ENCODE measurements at regions of chr6 and their contacts with region 1.

Region 1: DNA sequence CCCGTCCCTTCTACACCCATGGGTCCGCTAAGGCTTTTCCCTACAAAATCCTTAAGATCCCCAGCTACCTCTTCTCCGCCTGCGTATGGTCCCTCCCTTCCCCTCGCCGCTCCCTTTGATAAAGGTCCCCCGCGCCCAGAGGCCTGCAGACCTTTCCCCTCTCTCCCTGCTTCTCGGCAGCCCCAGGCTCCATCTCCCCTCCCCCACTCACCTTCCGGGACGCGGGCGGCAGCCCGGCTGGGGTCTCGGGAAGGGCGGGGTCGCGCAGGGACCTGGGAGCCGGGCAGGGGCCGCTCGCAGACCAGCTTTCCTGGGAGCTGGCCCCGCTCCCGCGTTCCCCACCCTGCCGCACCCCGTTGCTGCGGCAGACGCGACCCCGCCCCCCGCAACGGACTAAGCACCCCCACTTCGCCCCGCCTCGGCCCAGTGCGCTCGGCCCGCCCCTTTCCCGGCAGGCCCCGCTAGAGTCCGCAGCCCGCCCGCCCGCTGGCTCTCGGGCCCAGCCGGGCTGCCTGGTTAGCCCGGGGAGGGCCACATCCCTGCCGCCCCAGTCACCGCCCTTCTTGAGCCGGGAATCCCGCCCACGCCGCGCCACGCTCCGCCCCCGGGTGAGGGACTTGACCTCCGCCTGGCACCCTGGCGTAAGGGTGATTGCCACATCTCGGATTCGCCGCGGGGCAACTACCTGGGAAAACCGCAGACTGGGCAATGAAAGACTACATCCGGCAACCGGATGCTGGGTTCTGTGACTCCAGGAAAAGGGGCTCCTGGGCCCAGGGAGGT is at the start of gene FLOT1:
- DNase-seq: peak in 7 of 9 donors; percentile 47 to 98 (median 56)
- ATAC-seq: peak; percentile 84
- H3K4me3 ChIP-seq: peak within 1 kb of the TSS; percentile 85
- H3K4me3 Mint-ChIP-seq: peak within 1 kb of the TSS; percentile 84 to 100 (median 93)
- H3K27ac ChIP-seq: peak within 1 kb of the TSS; percentile 83
- H3K27ac Mint-ChIP-seq: peak within 1 kb of the TSS; percentile 84 to 98 (median 93)
- H3K4me1 ChIP-seq: peaks cover 28 to 35% of the 10 kb centered on the region in 2 donors
- H3K4me1 Mint-ChIP-seq: peaks cover 48 to 74% (median 61%) of the 10 kb centered on the region in 7 donors
- H3K27me3 ChIP-seq: no peaks in the 10 kb centered on the region
- H3K27me3 Mint-ChIP-seq: no peaks in the 10 kb centered on the region
- total RNA-seq, gene FLOT1: 59.4 to 204 (median 81.3) TPM

Region 2: DNA sequence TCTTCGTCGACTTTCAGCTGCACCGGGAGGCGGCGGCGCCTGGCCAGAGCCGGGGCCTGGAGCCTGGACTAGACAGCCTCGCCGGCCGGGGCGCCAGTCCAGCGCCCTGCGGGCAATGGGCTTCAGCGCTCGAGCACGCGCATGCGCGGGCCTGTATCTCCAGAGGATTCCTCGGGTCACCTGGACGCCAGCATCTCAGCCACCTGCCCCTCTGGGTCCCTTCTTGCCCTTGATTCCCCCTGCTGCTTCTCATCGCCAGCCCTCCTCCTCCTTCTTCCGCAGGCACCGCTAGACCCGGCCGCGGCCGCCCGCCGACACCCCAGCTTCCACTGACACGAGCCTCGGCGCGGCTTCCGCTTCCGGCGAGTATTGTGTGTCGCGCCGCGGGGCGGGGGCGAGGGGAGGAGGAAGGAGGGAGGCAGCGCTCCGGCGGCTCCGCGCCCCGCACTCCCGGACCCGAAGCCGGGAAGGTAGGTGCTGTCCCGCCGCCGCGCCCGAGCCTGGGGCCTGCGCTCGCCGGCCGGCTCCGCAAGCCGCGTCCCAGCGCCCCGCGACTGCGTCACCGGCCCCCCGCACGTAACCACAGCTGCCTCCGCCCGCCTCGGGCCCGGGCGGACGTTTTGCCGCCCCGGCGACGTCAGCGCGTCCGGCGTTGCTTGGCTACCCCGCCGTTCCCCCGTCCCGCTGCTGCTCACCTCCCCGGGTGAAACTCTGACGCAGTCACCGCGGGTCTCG is 415.8 kb before region 1 on chr6 and contains the start of gene TRIM39:
- CTCF ChIA-PET with region 1: no interaction called
- POLR2A ChIA-PET with region 1: no interaction called
- intact Hi-C with region 1: loop called in 1 of 2 experiments (anchors 10 kb)
- DNase-seq: peak; percentile 88 to 94 (median 92)
- ATAC-seq: peak; percentile 76
- H3K4me3 ChIP-seq: peak within 1 kb of the TSS; percentile 70
- H3K4me3 Mint-ChIP-seq: peak within 1 kb of the TSS; percentile 93 to 99 (median 97)
- H3K27ac ChIP-seq: peak within 1 kb of the TSS; percentile 100
- H3K27ac Mint-ChIP-seq: peak within 1 kb of the TSS; percentile 92 to 100 (median 99)
- H3K4me1 ChIP-seq: peaks cover 34 to 48% of the 10 kb centered on the region in 2 donors
- H3K4me1 Mint-ChIP-seq: peaks cover 42 to 70% (median 63%) of the 10 kb centered on the region in 7 donors
- H3K27me3 ChIP-seq: no peaks in the 10 kb centered on the region
- H3K27me3 Mint-ChIP-seq: no peaks in the 10 kb centered on the region
- total RNA-seq, gene TRIM39: 12.8 to 42.1 (median 26.4) TPM

Region 3: GRCh38 chr6:30730601-30731435 is 11.7 kb before region 1 on chr6:
- CTCF ChIA-PET with region 1: interaction called, 8 read pairs
- POLR2A ChIA-PET with region 1: interaction called, 5 read pairs
- intact Hi-C with region 1: loop called in 1 of 2 experiments (anchors 2 kb)
- DNase-seq: peak; percentile 62 to 86 (median 81)
- ATAC-seq: peak; percentile 97
- H3K4me3 ChIP-seq: no peak overlapping the region
- H3K4me3 Mint-ChIP-seq: peak overlapping the region in 9 of 10 donors; percentile 27 to 69 (median 55)
- H3K27ac ChIP-seq: peak overlapping the region; percentile 52
- H3K27ac Mint-ChIP-seq: peak overlapping the region in 7 of 9 donors; percentile 29 to 79 (median 73)
- H3K4me1 ChIP-seq: peaks cover 14 to 30% of the 10 kb centered on the region in 2 donors
- H3K4me1 Mint-ChIP-seq: peaks cover 27 to 54% (median 42%) of the 10 kb centered on the region in 7 donors
- H3K27me3 ChIP-seq: no peaks in the 10 kb centered on the region
- H3K27me3 Mint-ChIP-seq: no peaks in the 10 kb centered on the region

Region 4: GRCh38 chr6:30781743-30782424 is 39.4 kb after region 1 on chr6:
- CTCF ChIA-PET with region 1: no interaction called
- POLR2A ChIA-PET with region 1: interaction called, 4 read pairs
- intact Hi-C with region 1: loop called in 1 of 2 experiments (anchors 1 kb)
- DNase-seq: peak in 2 of 9 donors; percentile 11 to 41
- ATAC-seq: peak; percentile 79
- H3K4me3 ChIP-seq: no peak overlapping the region
- H3K4me3 Mint-ChIP-seq: peak overlapping the region; percentile 28 to 79 (median 53)
- H3K27ac ChIP-seq: peak overlapping the region; percentile 26
- H3K27ac Mint-ChIP-seq: peak overlapping the region; percentile 23 to 83 (median 62)
- H3K4me1 ChIP-seq: peaks cover 0 to 24% of the 10 kb centered on the region in 2 donors
- H3K4me1 Mint-ChIP-seq: peaks cover 36 to 73% (median 70%) of the 10 kb centered on the region in 7 donors
- H3K27me3 ChIP-seq: no peaks in the 10 kb centered on the region
- H3K27me3 Mint-ChIP-seq: peaks cover 0 to 4% (median 0%) of the 10 kb centered on the region in 5 donors

Region 5: GRCh38 chr6:30814136-30815040 is 71.9 kb after region 1 on chr6:
- CTCF ChIA-PET with region 1: interaction called, 3 read pairs
- POLR2A ChIA-PET with region 1: interaction called, 6 read pairs
- intact Hi-C with region 1: loop called (anchors 2 to 5 kb)
- DNase-seq: peak in 2 of 9 donors; percentile 38 to 63
- ATAC-seq: peak; percentile 80
- H3K4me3 ChIP-seq: no peak overlapping the region
- H3K4me3 Mint-ChIP-seq: peak overlapping the region in 9 of 10 donors; percentile 12 to 70 (median 39)
- H3K27ac ChIP-seq: no peak overlapping the region
- H3K27ac Mint-ChIP-seq: peak overlapping the region; percentile 49 to 95 (median 83)
- H3K4me1 ChIP-seq: peaks cover 18 to 40% of the 10 kb centered on the region in 2 donors
- H3K4me1 Mint-ChIP-seq: peaks cover 39 to 85% (median 78%) of the 10 kb centered on the region in 7 donors
- H3K27me3 ChIP-seq: no peaks in the 10 kb centered on the region
- H3K27me3 Mint-ChIP-seq: no peaks in the 10 kb centered on the region